ENCODE measurements at regions of chr1 and their contacts with region 1.

Region 1: DNA sequence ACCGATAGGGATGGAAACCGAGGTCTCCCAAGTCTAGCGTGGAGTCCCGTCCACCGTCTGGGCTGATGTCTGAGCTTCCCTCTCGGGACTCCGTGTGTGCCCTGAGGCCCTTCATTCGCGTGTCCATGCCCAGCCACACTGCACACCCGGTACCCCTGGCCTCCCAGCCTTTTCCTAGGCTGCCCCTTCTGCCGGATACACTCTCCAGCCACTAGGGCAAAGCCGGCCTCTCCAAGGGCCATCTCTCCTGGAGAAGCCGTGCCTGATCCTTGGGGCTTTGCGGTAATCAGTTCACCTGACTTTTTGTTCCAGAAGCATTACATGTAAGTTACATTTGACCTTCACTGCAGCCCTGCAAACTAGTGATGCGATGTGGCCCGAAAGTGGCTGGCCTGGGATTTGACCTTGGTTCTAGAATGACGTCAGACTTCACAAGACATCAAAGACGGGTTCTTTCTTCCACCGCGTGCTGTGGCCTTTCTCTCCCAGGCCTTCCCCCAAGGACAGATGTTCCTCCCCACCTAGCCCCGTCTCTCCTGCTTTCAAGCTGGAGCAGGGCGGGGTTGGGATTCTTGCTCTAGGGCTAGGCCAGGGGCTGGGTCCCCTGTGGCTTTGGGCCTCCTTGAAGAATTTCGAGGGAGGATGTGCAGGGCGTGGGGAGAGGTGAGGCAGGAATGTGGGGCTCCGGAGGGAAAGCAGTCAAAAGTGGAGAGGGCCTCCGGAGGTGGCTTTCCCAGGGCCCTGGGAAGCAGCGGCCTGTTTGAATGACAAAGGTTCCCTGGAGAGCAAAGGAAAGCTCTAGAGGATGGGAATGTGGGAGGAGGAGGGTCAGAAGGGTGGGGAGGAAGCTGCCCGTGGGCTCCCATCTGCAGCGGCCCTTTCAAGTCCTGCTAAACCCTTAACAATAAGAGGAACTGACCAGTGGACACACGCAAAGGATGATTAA is 49.7 kb upstream of the SLC2A1 start:
- DNase-seq: peak; percentile 85
- ATAC-seq: peak; percentile 80
- H3K4me3 ChIP-seq: peak overlapping the region; percentile 11 to 34
- H3K27ac ChIP-seq: peak overlapping the region; percentile 94
- H3K4me1 ChIP-seq: peaks cover 48 to 78% of the 10 kb centered on the region in 2 experiments
- H3K27me3 ChIP-seq: no peaks in the 10 kb centered on the region
- CTCF ChIP-seq: peak in 1 of 3 experiments; percentile 16; a peak in 1 of 6 replicates
- POLR2A ChIP-seq: no peak
- RAD21 ChIP-seq: no peak

Region 2: GRCh38 chr1:42968654-42969053 is 39.7 kb before region 1 on chr1:
- CTCF ChIA-PET with region 1: no interaction called
- POLR2A ChIA-PET with region 1: no interaction called
- RAD21 ChIA-PET with region 1: no interaction called
- intact Hi-C with region 1: loop called (anchors 5 kb)
- DNase-seq: no peak
- ATAC-seq: no peak
- H3K4me3 ChIP-seq: no peak overlapping the region
- H3K27ac ChIP-seq: no peak overlapping the region
- H3K4me1 ChIP-seq: peaks cover 29 to 57% of the 10 kb centered on the region in 2 experiments
- H3K27me3 ChIP-seq: no peaks in the 10 kb centered on the region
- CTCF ChIP-seq: no peak
- POLR2A ChIP-seq: no peak
- RAD21 ChIP-seq: no peak